CD4-positive, alpha-beta T cell (primary cell): ENCODE measurements at regions of chr15 and their contacts with region 1.

Region 1: DNA sequence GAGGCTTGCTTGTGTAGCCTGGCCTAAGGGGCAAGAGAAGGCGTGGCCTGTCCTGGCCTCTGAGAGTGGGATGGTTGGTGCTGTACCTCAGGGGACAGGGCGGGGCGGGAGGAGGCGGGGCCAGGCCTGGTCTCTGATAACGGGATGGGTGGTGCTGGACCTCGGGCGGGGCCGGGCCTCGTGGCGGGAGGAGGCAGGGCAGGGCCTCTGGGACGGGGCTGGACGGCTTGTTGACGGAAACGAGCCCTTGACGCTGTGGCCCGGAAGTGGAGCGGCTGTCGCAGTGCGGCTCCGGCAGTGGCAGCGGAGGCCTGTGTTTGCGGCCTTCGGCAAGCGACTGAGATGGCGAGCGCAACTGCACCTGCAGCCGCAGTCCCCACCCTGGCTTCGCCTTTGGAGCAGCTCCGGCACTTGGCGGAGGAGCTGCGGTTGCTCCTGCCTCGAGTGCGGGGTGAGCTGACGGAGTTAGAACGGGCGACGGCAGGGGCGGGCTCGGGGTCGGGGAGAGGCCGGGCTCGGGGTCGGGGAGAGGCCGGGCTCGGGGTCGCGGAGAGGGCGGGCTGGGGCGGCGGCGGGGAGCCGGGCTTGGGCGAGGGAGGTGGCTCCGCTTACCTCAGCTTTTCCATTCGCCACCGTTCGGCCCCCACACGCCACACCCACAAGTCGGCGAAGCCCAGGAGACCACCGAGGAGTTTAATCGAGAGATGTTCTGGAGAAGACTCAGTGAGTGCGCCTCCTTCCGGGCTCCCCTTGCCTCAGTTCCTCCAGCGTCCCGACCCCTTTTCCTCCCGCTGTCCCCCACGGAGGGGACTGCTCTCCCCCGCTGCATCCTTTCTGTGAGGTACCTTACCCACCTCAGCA is at the start of gene CCNDBP1:
- DNase-seq: peak; percentile 71 to 96 (median 84)
- ATAC-seq: peak; percentile 77
- H3K4me3 ChIP-seq: peak within 1 kb of the TSS; percentile 71
- H3K4me3 Mint-ChIP-seq: peak within 1 kb of the TSS; percentile 96
- H3K27ac ChIP-seq: peak within 1 kb of the TSS; percentile 89 to 91
- H3K27ac Mint-ChIP-seq: peak within 1 kb of the TSS; percentile 98
- H3K4me1 ChIP-seq: peaks cover 23% of the 10 kb centered on the region
- H3K4me1 Mint-ChIP-seq: peaks cover 43% of the 10 kb centered on the region
- H3K27me3 ChIP-seq: no peaks in the 10 kb centered on the region
- H3K27me3 Mint-ChIP-seq: no peaks in the 10 kb centered on the region
- CTCF ChIP-seq: peak; percentile 47
- total RNA-seq, gene CCNDBP1: 92.3 to 103 TPM

Region 2: DNA sequence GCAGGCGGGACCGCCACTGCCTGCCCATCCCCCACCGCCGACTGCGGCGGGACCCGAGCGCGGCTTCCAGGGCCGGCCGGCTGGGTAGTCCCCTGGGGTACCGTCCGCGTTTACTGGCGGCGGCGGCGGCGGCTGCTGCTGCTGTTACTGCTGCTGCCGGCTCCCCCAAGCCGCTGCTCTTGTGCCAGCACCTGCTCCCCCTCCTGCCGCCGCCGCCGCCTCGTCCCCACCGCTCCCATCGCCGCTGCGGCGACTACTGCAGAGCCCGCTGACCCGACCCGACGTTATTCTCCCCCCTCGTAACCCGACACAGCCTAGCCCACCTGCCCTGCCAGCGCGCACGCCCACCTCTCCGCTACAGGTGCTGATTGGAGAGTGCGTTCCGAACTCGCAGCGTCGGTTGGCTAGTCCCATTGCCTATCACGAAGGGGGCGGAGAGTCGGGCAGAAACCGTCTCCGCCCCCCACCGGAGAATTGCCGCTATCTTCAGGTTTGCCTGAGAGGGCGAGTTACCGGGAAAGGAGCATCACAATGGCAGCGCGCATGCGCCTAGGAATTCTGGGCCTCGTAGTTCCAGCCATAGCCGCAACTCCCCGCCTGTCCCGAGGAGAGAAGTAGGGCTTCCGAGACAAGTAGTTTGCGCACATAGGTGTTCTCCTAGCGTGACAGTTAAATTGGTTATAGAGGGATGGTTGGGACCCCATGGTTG is 264.7 kb before region 1 on chr15 and contains the start of gene TTBK2:
- CTCF ChIA-PET with region 1: no interaction called
- POLR2A ChIA-PET with region 1: no interaction called
- intact Hi-C with region 1: loop called in 1 of 2 experiments (anchors 10 kb)
- DNase-seq: peak; percentile 94 to 99 (median 98)
- ATAC-seq: peak; percentile 96
- H3K4me3 ChIP-seq: peak within 1 kb of the TSS; percentile 75
- H3K4me3 Mint-ChIP-seq: peak within 1 kb of the TSS; percentile 99
- H3K27ac ChIP-seq: peak within 1 kb of the TSS; percentile 59 to 63
- H3K27ac Mint-ChIP-seq: peak within 1 kb of the TSS; percentile 89
- H3K4me1 ChIP-seq: peaks cover 15% of the 10 kb centered on the region
- H3K4me1 Mint-ChIP-seq: peaks cover 35% of the 10 kb centered on the region
- H3K27me3 ChIP-seq: no peaks in the 10 kb centered on the region
- H3K27me3 Mint-ChIP-seq: no peaks in the 10 kb centered on the region
- CTCF ChIP-seq: peak; percentile 26
- total RNA-seq, gene TTBK2: 17.5 to 20.1 TPM

Region 3: DNA sequence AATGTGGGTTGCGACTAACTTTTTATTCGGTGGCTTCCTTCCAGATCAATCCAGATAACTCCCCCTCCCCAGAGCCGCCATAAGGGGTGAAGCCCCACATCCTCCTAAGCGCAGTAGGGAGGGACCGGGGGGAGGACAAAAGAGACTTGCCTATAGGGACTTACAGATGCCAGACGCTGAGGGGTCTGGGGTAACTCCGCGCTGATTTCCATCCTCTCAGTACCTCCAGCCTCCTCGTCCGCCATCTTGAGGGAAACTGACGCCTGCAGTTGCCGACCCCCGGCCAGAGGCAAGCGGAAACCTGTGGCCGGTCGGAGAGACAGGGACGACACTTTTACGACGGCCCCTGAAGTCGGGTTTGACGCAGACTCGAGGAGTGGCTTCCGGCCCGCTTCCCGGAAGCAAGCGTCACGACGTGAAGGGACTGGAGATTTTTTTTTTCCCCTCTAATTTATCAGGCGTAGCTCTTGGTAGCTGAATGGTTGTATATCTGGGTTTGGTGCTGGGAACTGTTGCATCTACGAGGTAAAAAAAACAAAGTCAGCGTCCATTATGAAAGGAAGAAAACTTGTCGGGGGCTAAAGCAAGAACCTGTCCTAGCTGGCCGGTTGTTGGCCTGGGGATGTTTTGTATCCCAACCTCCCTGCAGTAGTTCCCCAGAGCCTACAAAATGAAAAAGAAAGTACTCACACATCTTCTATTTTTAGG is 79.5 kb before region 1 on chr15 and contains the start of gene UBR1:
- CTCF ChIA-PET with region 1: no interaction called
- POLR2A ChIA-PET with region 1: interaction called, 11 read pairs
- intact Hi-C with region 1: loop called (anchors 2 to 5 kb)
- DNase-seq: peak; percentile 73 to 96 (median 82)
- ATAC-seq: peak; percentile 81
- H3K4me3 ChIP-seq: peak within 1 kb of the TSS; percentile 89
- H3K4me3 Mint-ChIP-seq: peak within 1 kb of the TSS; percentile 93
- H3K27ac ChIP-seq: peak within 1 kb of the TSS; percentile 90 to 95
- H3K27ac Mint-ChIP-seq: peak within 1 kb of the TSS; percentile 96
- H3K4me1 ChIP-seq: peaks cover 30% of the 10 kb centered on the region
- H3K4me1 Mint-ChIP-seq: peaks cover 56% of the 10 kb centered on the region
- H3K27me3 ChIP-seq: no peaks in the 10 kb centered on the region
- H3K27me3 Mint-ChIP-seq: peaks cover 5% of the 10 kb centered on the region
- CTCF ChIP-seq: no peak
- total RNA-seq, gene UBR1: 42.6 to 45.9 TPM

Region 4: GRCh38 chr15:43133430-43134156 is 51.8 kb before region 1 on chr15 and contains the start of gene TMEM62:
- CTCF ChIA-PET with region 1: no interaction called
- POLR2A ChIA-PET with region 1: interaction called, 8 read pairs
- intact Hi-C with region 1: loop called in 1 of 2 experiments (anchors 1 kb)
- DNase-seq: peak; percentile 26 to 79 (median 44)
- ATAC-seq: peak; percentile 79
- H3K4me3 ChIP-seq: peak within 1 kb of the TSS; percentile 65
- H3K4me3 Mint-ChIP-seq: peak within 1 kb of the TSS; percentile 90
- H3K27ac ChIP-seq: peak within 1 kb of the TSS; percentile 22 to 41
- H3K27ac Mint-ChIP-seq: peak within 1 kb of the TSS; percentile 69
- H3K4me1 ChIP-seq: peaks cover 15% of the 10 kb centered on the region
- H3K4me1 Mint-ChIP-seq: peaks cover 17% of the 10 kb centered on the region
- H3K27me3 ChIP-seq: no peaks in the 10 kb centered on the region
- H3K27me3 Mint-ChIP-seq: no peaks in the 10 kb centered on the region
- CTCF ChIP-seq: no peak
- total RNA-seq, gene TMEM62: 17.5 to 22.5 TPM

Region 5: GRCh38 chr15:43285609-43286037 is 100.2 kb after region 1 on chr15:
- CTCF ChIA-PET with region 1: interaction called, 3 read pairs
- POLR2A ChIA-PET with region 1: interaction called, 3 read pairs
- intact Hi-C with region 1: loop called in 1 of 2 experiments (anchors 1 kb)
- DNase-seq: peak in 13 of 14 experiments; percentile 24 to 80 (median 47)
- ATAC-seq: peak; percentile 77
- H3K4me3 ChIP-seq: no peak overlapping the region
- H3K4me3 Mint-ChIP-seq: no peak overlapping the region
- H3K27ac ChIP-seq: no peak overlapping the region
- H3K27ac Mint-ChIP-seq: no peak overlapping the region
- H3K4me1 ChIP-seq: no peaks in the 10 kb centered on the region
- H3K4me1 Mint-ChIP-seq: peaks cover 4% of the 10 kb centered on the region
- H3K27me3 ChIP-seq: no peaks in the 10 kb centered on the region
- H3K27me3 Mint-ChIP-seq: peaks cover 15% of the 10 kb centered on the region
- CTCF ChIP-seq: peak; percentile 74